ENCODE measurements at regions of chr1 and their contacts with region 1.

Region 1: GRCh38 chr1:44660176-44660575 is 14.1 kb downstream of the TMEM53 start:
- DNase-seq: no peak
- H3K4me3 ChIP-seq: no peak overlapping the region
- H3K27ac ChIP-seq: no peak overlapping the region
- H3K4me1 ChIP-seq: no peaks in the 10 kb centered on the region; a peak in 2 of 7 replicates
- H3K27me3 ChIP-seq: no peaks in the 10 kb centered on the region
- CTCF ChIP-seq: no peak
- EP300 ChIP-seq: no peak
- POLR2A ChIP-seq: no peak
- RAD21 ChIP-seq: no peak

Region 2: GRCh38 chr1:44674113-44675000 is 14.2 kb after region 1 on chr1 and contains the starts of genes ARMH1 and TMEM53:
- CTCF ChIA-PET with region 1: interaction called, 29 read pairs
- POLR2A ChIA-PET with region 1: interaction called, 14 read pairs
- DNase-seq: peak; percentile 97 to 98
- H3K4me3 ChIP-seq: peak within 1 kb of the TSS; percentile 58 to 93 (median 75)
- H3K27ac ChIP-seq: peak within 1 kb of the TSS; percentile 80
- H3K4me1 ChIP-seq: peaks cover 4 to 11% (median 6%) of the 10 kb centered on the region in 4 experiments; a peak in 6 of 7 replicates
- H3K27me3 ChIP-seq: no peaks in the 10 kb centered on the region; a peak in 1 of 7 replicates
- CTCF ChIP-seq: no peak
- EP300 ChIP-seq: no peak
- POLR2A ChIP-seq: peak; percentile 82 to 89
- RAD21 ChIP-seq: no peak
- total RNA-seq, gene ARMH1: 0.63 and 0.82 TPM in 2 replicates
- total RNA-seq, gene TMEM53: 6.7 and 9.5 TPM in 2 replicates

Measured in H1 (cell line).